Colonic mucosa (tissue), 4 donors: ENCODE measurements at regions of chr2 and their contacts with region 1.

Region 1: GRCh38 chr2:19369341-19369955 is 11.0 kb upstream of the OSR1 start:
- DNase-seq: no peak
- H3K4me3 ChIP-seq: no peak overlapping the region
- H3K27ac ChIP-seq: no peak overlapping the region
- H3K4me1 ChIP-seq: no peaks in the 10 kb centered on the region
- H3K27me3 ChIP-seq: no peaks in the 10 kb centered on the region
- CTCF ChIP-seq: peak; percentile 16

Region 2: DNA sequence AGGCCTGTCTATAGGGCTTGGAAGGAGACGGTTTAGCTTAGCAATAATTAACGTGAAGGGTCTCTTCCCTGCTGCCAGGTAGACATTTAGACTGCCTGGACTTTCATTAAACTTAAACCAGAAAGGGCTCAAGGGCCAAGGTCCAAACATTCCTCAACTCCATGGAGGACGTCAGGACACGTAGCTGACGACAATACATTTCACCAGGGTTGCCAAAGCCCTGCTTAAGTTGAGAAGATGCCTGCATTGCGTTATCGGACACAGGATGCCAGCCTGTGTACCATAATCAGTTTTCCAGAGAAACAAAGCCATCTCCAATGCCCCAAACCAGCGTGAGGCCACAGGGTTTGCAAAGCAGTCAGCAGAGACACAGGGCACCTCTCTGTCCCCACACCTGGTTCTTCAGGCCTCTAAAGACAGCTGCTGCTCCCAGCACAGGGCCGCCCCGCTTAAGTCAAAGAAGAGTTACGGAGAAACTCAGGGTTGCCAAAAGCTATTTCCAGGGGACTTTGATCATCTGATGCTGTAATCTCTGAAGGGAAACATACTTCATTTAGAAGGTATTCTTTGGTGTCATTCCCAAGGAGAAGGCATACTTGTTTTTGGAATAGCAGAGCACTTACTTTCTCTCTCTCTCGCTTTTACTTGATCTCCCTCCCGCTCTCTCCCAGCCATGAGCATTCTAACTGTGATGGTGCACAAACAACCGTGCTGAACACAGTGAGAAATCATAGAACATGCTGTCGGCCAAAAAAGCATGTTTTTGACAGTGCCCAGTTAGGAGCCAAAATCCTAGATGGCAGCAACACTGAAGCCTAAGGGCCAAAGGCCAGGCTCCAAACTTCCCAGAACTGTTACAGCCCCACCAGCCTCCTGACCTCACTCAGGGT is 486.3 kb after region 1 on chr2:
- intact Hi-C with region 1: loop called (anchors 5 kb)
- DNase-seq: no peak
- H3K4me3 ChIP-seq: no peak overlapping the region
- H3K27ac ChIP-seq: no peak overlapping the region
- H3K4me1 ChIP-seq: no peaks in the 10 kb centered on the region
- H3K27me3 ChIP-seq: no peaks in the 10 kb centered on the region
- CTCF ChIP-seq: no peak